Spleen (tissue), 13 donors: ENCODE measurements at regions of chr1 and their contacts with region 1.

Region 1: DNA sequence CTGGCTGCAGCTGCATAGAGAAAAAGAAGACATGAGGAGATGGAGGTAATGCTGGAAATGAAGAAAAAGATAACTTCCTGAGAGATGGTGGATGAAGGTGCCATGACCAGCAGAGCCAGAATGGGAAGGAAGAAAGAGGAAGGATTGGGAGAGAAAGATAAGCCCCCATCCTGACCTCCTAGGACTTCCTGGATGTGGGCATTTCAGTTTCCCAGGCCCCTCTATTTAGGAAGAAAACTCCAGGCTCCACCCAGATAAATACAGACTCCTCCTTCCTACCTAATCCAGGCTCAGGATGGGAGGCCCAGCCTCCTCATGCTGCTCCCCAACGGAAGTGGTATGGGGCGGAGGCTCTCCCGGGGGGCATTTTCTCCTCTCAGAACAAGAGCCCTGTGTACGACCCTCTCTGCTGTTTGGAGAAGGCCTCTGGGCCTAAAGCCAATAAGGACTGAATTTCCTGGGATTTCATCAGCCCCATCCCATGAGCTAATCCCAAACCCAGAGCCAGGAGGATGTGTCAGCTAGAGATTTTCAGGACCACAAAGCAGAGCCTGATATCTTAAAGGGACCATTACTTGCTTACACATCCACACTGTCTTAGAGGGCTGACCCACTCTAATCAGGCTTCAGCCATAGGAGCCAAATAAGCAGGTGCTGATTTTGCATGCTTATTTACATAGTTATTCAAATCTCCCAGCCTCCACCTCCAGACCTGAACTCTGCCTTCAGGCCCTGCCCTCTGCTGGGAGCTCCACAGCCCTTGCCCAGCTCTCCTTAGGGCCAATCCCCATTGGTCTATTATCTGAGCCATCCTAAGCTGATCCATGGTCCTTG is 5.1 kb upstream of the ARHGEF2 start:
- DNase-seq: no peak
- H3K4me3 ChIP-seq: no peak overlapping the region
- H3K27ac ChIP-seq: peak overlapping the region in 7 of 8 donors; percentile 46 to 99 (median 98)
- H3K4me1 ChIP-seq: peaks cover 41 to 87% (median 63%) of the 10 kb centered on the region in 6 donors
- H3K27me3 ChIP-seq: no peaks in the 10 kb centered on the region
- CTCF ChIP-seq: peak in 6 of 11 experiments; percentile 16 to 28 (median 20)
- POLR2A ChIP-seq: no peak

Region 2: GRCh38 chr1:155759966-155760630 is 223.3 kb before region 1 on chr1:
- intact Hi-C with region 1: no loop called
- DNase-seq: no peak
- H3K4me3 ChIP-seq: no peak overlapping the region
- H3K27ac ChIP-seq: no peak overlapping the region
- H3K4me1 ChIP-seq: peaks cover 0 to 28% (median 0%) of the 10 kb centered on the region in 6 donors
- H3K27me3 ChIP-seq: no peaks in the 10 kb centered on the region
- CTCF ChIP-seq: no peak
- POLR2A ChIP-seq: no peak

Region 3: DNA sequence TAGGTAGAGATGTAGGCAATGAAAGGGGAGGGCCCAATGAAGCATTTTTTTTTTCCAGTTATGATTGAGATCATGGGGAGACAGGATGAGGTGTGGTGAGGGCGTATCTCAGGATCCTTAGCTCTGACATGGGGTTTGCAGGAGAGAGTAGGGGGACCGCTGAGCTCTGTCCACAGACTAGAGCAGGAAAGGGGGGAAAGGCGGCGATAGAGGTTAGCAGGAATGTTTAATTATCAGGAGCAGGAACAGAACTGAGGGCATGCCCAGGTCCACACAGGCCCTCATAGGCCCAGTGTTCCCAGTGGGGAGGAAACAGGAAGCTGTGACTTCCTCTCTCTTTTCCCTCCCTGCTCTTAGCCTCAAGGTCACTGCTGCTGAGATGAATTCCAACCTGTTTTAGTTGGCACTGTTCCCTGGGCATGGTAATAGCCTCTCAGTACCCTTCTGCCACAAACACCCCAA is 42.8 kb before region 1 on chr1:
- intact Hi-C with region 1: loop called (anchors 5 kb)
- DNase-seq: peak; percentile 66
- H3K4me3 ChIP-seq: no peak overlapping the region
- H3K27ac ChIP-seq: peak overlapping the region; percentile 70 to 90 (median 79)
- H3K4me1 ChIP-seq: peaks cover 48 to 83% (median 77%) of the 10 kb centered on the region in 6 donors
- H3K27me3 ChIP-seq: no peaks in the 10 kb centered on the region
- CTCF ChIP-seq: no peak
- POLR2A ChIP-seq: no peak

Region 4: GRCh38 chr1:156146020-156146768 is 162.8 kb after region 1 on chr1:
- intact Hi-C with region 1: no loop called
- DNase-seq: peak; percentile 87
- H3K4me3 ChIP-seq: peak overlapping the region in 2 of 8 donors; percentile 4 to 41
- H3K27ac ChIP-seq: peak overlapping the region in 6 of 8 donors; percentile 7 to 92 (median 88)
- H3K4me1 ChIP-seq: peaks cover 34 to 57% (median 56%) of the 10 kb centered on the region in 6 donors
- H3K27me3 ChIP-seq: peaks cover 0 to 13% (median 0%) of the 10 kb centered on the region in 7 donors
- CTCF ChIP-seq: peak; percentile 60 to 89 (median 79)
- POLR2A ChIP-seq: no peak